Activated naive CD8-positive, alpha-beta T cell treated with anti-CD3 and anti-CD28 coated beads, Interleukin-2, amount 10 ng/mL, durations not matched to agents 7 days and 5 days (primary cell): ENCODE measurements at regions of chr21 and their contacts with region 1.

Region 1: DNA sequence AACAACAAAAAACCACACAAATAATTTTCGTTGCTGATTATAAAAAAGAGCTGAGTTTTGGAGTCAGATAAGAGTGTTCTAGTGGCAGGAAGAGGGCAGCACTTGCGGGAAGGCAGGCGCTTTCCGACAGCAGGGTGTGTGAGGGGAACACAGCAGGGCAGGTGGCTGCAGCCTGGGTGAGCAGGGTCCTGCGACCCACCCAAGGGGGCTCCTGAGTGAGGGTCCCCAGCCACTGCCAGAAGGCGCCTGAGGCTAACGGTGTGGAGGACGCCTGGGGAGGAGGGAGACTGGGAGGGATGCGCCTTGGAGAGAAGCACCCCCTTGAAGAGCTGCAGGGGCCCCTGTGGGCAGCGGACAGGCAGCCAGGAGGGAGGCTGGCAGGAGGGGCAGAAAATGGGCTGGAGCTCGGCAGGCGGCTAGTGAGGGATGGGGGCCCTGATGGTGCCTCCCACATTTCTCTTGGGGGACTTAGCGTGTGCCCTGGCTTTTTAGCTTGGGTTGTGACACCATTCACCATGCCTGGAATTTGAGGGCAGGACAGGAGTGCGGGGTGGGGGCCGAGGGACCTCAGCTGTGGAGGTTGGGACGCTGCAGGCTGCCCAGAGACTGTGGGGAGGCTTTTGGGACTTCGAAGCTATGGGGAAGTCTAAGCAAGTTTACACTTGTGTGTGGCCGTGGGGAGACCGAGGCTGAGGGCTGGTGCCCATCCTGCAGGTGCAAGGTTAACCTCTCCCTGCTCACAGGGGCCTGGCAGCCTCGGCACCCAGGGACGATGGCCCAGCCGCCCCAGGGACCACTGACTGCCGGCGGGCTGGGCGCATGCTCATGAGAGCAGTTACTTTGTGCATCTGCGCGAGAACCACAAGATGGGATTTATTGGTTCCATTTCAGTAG is 111.4 kb downstream of the SIK1 start:
- DNase-seq: peak; percentile 67
- ATAC-seq: peak; percentile 70
- H3K4me3 Mint-ChIP-seq: peak overlapping the region; percentile 85
- H3K27ac Mint-ChIP-seq: peak overlapping the region; percentile 97
- H3K4me1 Mint-ChIP-seq: peaks cover 41% of the 10 kb centered on the region
- H3K27me3 Mint-ChIP-seq: peaks cover 3% of the 10 kb centered on the region

Region 2: DNA sequence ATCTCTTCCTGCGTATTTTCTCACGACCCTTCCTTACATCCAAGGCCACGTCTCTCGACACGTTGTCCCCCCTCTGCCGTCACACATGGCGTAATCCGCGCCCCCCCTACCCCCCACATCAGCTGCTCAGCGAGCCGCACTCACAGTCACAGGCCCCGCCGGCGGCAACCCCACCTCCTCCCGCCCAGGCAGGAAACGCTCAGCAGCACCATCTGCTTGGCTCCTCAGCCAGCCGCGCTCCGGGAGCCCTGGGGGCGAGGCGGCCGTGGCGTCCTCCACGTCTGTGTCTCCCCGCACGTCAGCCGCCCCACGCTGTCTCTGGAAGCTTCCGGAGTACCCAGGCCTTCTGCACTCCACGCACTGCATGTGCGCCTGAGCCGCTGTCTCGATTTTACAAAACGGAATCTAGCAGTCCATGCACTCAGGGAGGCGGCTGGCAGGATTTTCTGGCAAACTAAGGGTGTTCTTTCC is 46.9 kb after region 1 on chr21:
- POLR2A ChIA-PET with region 1: interaction called, 10 read pairs
- DNase-seq: peak; percentile 89
- ATAC-seq: peak; percentile 85
- H3K4me3 Mint-ChIP-seq: peak overlapping the region; percentile 93
- H3K27ac Mint-ChIP-seq: peak overlapping the region; percentile 99
- H3K4me1 Mint-ChIP-seq: peaks cover 38% of the 10 kb centered on the region
- H3K27me3 Mint-ChIP-seq: peaks cover 2% of the 10 kb centered on the region